ENCODE measurements at regions of chr6 and their contacts with region 1.

Region 1: GRCh38 chr6:108883172-108883571 is 35.0 kb downstream of the ARMC2 start:
- DNase-seq: no peak
- H3K4me3 Mint-ChIP-seq: no peak overlapping the region
- H3K27ac Mint-ChIP-seq: peak overlapping the region; percentile 48
- H3K4me1 Mint-ChIP-seq: peaks cover 30% of the 10 kb centered on the region
- H3K27me3 Mint-ChIP-seq: peaks cover 13% of the 10 kb centered on the region

Region 2: GRCh38 chr6:108152446-108152845 is 730.7 kb before region 1 on chr6:
- CTCF ChIA-PET with region 1: no interaction called
- POLR2A ChIA-PET with region 1: no interaction called
- DNase-seq: no peak
- H3K4me3 Mint-ChIP-seq: no peak overlapping the region
- H3K27ac Mint-ChIP-seq: no peak overlapping the region
- H3K4me1 Mint-ChIP-seq: no peaks in the 10 kb centered on the region
- H3K27me3 Mint-ChIP-seq: peaks cover 66% of the 10 kb centered on the region

Region 3: GRCh38 chr6:108780811-108781210 is 102.4 kb before region 1 on chr6:
- CTCF ChIA-PET with region 1: no interaction called
- POLR2A ChIA-PET with region 1: interaction called, 15 read pairs
- DNase-seq: no peak
- H3K4me3 Mint-ChIP-seq: no peak overlapping the region
- H3K27ac Mint-ChIP-seq: no peak overlapping the region
- H3K4me1 Mint-ChIP-seq: peaks cover 11% of the 10 kb centered on the region
- H3K27me3 Mint-ChIP-seq: peaks cover 49% of the 10 kb centered on the region

Region 4: DNA sequence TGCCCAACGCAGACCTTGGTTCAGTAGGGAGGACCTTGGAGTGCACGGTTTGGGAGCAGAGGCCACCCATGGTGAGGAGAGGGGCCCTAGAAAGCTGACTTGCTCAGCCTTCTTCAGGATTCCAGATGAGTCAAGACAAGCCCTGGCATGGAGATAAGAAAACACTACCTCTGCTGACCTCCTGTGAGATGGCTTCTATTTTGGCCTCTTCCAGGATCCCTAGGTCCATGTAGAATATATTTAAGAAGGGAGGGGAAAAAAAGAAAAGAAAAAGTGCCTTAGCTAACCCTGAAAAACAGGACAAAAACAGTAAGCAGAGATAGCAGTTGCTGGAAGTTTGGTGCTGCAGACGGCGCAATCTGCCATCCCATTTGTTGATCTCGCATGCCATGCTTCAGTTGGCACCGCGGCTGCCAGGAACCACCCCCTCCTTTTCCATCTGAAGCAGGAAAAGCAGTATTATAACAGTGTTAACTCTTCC is 65.0 kb after region 1 on chr6:
- CTCF ChIA-PET with region 1: no interaction called
- POLR2A ChIA-PET with region 1: no interaction called
- DNase-seq: no peak
- H3K4me3 Mint-ChIP-seq: no peak overlapping the region
- H3K27ac Mint-ChIP-seq: no peak overlapping the region
- H3K4me1 Mint-ChIP-seq: peaks cover 31% of the 10 kb centered on the region
- H3K27me3 Mint-ChIP-seq: no peaks in the 10 kb centered on the region